Sigmoid colon (tissue), 7 donors: ENCODE measurements at regions of chr5 and their contacts with region 1.

Region 1: DNA sequence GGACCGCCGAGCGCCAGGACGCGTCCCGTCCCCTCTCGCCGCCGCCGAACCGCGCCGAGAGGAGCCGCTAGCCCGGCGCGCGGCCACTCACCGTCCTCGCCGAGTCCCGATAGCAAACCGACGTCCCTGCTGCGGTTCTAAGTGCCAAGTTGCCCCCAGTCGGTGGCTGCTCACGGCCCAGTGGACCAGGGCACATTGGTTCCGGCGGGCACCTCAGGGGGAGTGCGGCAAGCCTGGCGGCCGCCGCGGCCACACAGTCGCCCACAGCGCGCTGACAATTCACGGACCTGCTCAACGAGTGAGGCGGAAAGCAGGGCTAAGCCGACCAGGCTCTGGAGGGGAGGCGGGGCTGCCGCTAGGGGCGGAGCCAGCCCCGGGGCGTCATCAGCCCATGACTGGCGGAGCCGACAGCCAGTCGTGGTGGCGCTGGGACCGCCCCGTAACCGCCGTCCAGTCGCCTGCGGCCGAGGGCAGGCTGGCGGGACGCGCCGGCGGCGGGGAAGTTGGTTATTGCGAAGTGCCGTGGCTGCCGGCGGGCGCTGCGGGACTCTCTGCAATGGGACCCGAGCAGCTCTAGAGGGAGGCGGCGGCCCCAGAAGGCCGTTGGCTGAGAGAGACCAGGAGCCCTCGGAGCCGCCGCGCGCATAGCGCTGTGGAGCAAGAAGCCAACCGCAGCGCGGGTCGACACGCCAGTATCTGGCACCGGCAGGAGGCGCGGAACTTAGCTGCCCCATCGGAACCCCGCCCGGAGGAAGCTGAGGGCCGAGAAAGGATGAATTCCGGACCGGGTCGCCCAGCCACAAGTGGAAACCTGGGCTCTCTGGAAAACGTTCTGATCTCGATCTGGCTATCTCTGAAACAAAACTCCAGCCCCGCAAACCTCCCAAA is at the start of gene MARCHF3:
- DNase-seq: peak; percentile 97
- H3K4me3 ChIP-seq: peak within 1 kb of the TSS; percentile 58 to 76 (median 64)
- H3K27ac ChIP-seq: peak within 1 kb of the TSS; percentile 82 to 90 (median 86)
- H3K4me1 ChIP-seq: peaks cover 0 to 26% (median 8%) of the 10 kb centered on the region in 4 donors
- H3K27me3 ChIP-seq: peaks cover 0 to 8% (median 0%) of the 10 kb centered on the region in 3 donors
- CTCF ChIP-seq: peak in 3 of 4 experiments; percentile 13 to 35 (median 21)
- EP300 ChIP-seq: no peak
- POLR2A ChIP-seq: peak; percentile 70 to 72
- total RNA-seq, gene MARCHF3: 4.4 to 14.6 (median 9.6) TPM

Region 2: DNA sequence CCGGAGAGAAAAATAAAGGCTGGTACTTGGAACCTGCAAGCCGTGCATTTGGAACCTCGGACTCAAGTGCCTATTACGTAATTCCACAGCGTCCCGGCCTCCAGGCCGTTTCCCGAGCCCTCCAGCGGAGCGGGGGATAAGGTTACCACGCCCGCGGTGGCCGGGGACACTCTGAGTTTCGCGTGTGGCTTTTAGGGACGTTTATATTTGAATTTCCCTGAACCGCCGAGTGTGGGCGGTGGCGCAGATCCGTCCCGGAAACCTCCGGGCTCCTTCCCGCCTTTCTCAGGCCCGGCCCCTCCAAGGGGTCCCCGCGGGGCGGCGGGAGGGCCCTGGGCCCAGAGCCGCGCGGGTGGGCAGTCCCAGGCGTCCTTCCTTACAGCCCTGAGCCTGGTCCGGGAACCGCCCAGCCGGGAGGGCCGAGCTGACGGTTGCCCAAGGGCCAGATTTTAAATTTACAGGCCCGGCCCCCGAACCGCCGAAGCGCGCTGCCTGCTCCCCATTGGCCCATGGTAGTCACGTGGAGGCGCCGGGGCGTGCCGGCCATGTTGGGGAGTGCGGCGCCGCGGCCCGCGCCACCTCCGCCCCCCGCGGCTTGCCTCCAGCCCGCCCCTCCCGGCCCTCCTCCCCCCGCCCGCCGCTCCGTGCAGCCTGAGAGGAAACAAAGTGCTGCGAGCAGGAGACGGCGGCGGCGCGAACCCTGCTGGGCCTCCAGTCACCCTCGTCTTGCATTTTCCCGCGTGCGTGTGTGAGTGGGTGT is 253.8 kb before region 1 on chr5 and contains the start of gene LMNB1:
- intact Hi-C with region 1: loop called (anchors 5 kb)
- DNase-seq: peak; percentile 97
- H3K4me3 ChIP-seq: peak within 1 kb of the TSS; percentile 54 to 77 (median 68)
- H3K27ac ChIP-seq: peak within 1 kb of the TSS; percentile 86 to 93 (median 90)
- H3K4me1 ChIP-seq: peaks cover 0 to 20% (median 11%) of the 10 kb centered on the region in 4 donors
- H3K27me3 ChIP-seq: no peaks in the 10 kb centered on the region
- CTCF ChIP-seq: no peak
- EP300 ChIP-seq: no peak
- POLR2A ChIP-seq: no peak
- total RNA-seq, gene LMNB1: 1.5 to 14.8 (median 5.8) TPM

Region 3: DNA sequence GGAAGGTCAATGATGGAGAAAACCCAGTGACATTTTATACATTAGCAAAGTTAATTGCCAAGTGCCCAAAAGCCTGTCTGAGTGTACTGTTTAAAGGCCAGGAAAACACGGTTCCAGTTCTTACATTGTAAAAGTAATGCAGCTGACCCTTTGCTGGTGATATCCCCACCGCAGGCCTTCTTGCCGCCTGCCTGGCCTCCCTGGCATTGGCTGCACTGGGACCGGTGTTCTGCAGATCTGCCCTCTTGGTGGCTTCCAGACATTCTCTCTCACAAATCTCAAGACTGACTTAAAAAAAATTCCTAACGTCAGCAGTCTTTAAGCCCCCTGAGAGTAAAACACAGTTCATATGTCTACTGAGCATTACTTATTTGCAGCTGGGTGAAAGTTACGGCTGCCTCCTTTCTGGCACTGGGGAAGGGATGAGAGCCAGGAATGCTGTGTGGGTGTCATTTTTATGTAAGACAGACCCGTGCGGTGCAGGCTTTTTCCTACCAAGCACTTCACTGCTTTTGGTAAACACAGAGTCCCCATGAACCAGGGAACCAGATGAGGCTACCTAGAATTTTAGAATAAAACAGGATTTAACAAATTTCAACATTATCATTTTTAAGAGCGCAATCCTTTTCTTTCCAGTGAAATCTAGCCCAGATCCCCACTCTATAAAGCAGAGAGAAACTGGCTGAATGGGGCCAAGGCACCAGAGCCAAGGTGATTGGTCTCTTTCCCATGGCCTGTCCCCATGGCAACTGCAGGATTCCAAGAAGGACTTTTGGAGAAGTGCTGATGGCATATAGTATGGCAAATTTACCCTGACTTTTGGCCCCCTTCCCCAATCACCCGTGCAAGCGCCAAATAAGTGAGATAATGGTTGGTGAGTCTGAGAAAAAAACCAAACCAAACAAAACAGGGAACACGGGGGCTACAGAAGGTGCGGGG is 172.8 kb before region 1 on chr5:
- intact Hi-C with region 1: loop called (anchors 5 kb)
- DNase-seq: peak; percentile 85
- H3K4me3 ChIP-seq: no peak overlapping the region
- H3K27ac ChIP-seq: peak overlapping the region in 3 of 4 donors; percentile 51 to 71 (median 61)
- H3K4me1 ChIP-seq: peaks cover 0 to 24% (median 18%) of the 10 kb centered on the region in 4 donors
- H3K27me3 ChIP-seq: no peaks in the 10 kb centered on the region
- CTCF ChIP-seq: no peak
- EP300 ChIP-seq: peak in 2 of 4 donors; percentile 15 to 49
- POLR2A ChIP-seq: no peak